ENCODE measurements at regions of chr1 and their contacts with region 1.

Region 1: GRCh38 chr1:205141236-205142101 is 19.7 kb upstream of the RBBP5 start:
- DNase-seq: peak; percentile 83
- H3K4me3 Mint-ChIP-seq: no peak overlapping the region
- H3K27ac Mint-ChIP-seq: no peak overlapping the region
- H3K4me1 Mint-ChIP-seq: peaks cover 4% of the 10 kb centered on the region
- H3K27me3 Mint-ChIP-seq: no peaks in the 10 kb centered on the region

Region 2: GRCh38 chr1:204989266-204990058 is 152.0 kb before region 1 on chr1:
- CTCF ChIA-PET with region 1: interaction called, 8 read pairs
- POLR2A ChIA-PET with region 1: no interaction called
- intact Hi-C with region 1: loop called (anchors 1 kb)
- DNase-seq: peak; percentile 75
- H3K4me3 Mint-ChIP-seq: no peak overlapping the region
- H3K27ac Mint-ChIP-seq: no peak overlapping the region
- H3K4me1 Mint-ChIP-seq: peaks cover 7% of the 10 kb centered on the region
- H3K27me3 Mint-ChIP-seq: peaks cover 2% of the 10 kb centered on the region

Region 3: GRCh38 chr1:205003393-205004131 is 137.9 kb before region 1 on chr1:
- CTCF ChIA-PET with region 1: no interaction called
- POLR2A ChIA-PET with region 1: no interaction called
- intact Hi-C with region 1: no loop called
- DNase-seq: no peak
- H3K4me3 Mint-ChIP-seq: no peak overlapping the region
- H3K27ac Mint-ChIP-seq: no peak overlapping the region
- H3K4me1 Mint-ChIP-seq: no peaks in the 10 kb centered on the region
- H3K27me3 Mint-ChIP-seq: no peaks in the 10 kb centered on the region

Region 4: GRCh38 chr1:205127646-205128045 is 13.8 kb before region 1 on chr1:
- CTCF ChIA-PET with region 1: interaction called, 19 read pairs
- POLR2A ChIA-PET with region 1: no interaction called
- intact Hi-C with region 1: loop called (anchors 2 kb)
- DNase-seq: no peak
- H3K4me3 Mint-ChIP-seq: no peak overlapping the region
- H3K27ac Mint-ChIP-seq: no peak overlapping the region
- H3K4me1 Mint-ChIP-seq: peaks cover 6% of the 10 kb centered on the region
- H3K27me3 Mint-ChIP-seq: no peaks in the 10 kb centered on the region

Region 5: DNA sequence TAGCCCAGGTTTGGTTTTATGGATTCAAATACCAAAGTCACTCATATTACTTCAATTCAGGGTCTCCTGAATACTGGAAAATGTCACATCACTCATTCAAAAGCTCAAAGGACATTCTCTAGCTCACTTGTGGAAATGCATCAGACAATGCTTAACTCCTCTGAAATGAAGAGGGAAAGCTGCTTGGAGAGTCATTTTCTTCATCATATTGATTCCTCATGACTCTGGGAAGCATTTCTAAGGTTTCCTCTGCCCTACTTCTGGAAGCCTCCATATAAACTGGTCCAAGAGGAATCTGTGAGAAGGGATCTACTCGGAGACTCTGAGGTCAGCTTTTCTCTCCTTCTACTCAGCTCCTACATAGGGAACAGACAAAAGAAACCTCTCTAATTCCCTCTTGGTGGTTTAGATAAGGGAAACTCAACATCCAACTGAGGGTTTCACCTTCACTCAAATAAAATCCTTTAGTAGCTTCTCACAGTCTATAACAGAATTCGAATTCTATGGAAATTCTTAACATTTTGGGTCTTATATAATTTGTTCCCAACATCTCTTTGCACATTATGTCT is 16.7 kb after region 1 on chr1:
- CTCF ChIA-PET with region 1: interaction called, 11 read pairs
- POLR2A ChIA-PET with region 1: no interaction called
- intact Hi-C with region 1: no loop called
- DNase-seq: no peak
- H3K4me3 Mint-ChIP-seq: no peak overlapping the region
- H3K27ac Mint-ChIP-seq: no peak overlapping the region
- H3K4me1 Mint-ChIP-seq: no peaks in the 10 kb centered on the region
- H3K27me3 Mint-ChIP-seq: no peaks in the 10 kb centered on the region